CD8-positive, alpha-beta T cell (primary cell): ENCODE measurements at regions of chr13 and their contacts with region 1.

Region 1: DNA sequence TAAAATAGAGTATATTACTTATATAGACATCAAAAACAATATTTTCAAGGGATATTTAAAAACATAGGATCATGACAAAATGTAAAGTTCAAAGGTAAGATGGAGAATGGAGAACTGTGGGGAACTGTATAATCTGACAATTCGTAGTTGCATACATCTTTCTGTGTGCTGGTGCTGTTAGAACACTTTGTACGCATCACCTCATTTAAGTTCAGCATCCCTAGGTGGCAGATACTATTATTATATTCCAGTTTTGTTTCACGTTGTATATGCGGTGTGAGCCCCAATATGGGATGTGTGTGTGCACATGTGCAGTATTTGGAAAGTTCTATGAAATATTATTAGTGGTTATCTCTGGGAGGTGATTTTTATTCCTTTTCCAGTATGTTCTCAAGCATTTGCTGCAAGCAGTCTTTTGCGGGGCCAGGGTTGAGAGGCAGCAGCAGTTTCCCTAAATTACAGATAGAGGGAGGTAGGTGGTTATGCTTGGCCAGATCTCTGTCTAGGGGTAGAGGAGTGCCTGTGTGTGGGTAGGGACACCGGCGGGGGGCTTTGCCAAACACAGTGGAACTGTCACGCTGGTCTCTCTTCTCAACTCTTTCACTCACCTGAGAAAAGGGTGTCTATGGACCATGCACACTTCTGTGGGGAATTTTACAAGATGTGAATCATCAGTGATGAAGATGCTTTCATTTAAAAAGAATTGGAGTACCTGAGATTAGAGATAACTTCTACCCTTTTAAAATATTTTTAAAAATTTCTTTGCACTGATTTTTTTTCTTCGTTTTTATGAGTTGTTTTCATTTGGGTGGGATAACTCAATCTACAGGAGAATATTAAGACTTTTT is 55.6 kb upstream of the ALOX5AP start:
- DNase-seq: peak in 8 of 9 experiments; percentile 20 to 69 (median 34)
- ATAC-seq: peak; percentile 93
- H3K4me3 ChIP-seq: no peak overlapping the region
- H3K4me3 Mint-ChIP-seq: no peak overlapping the region
- H3K27ac ChIP-seq: no peak overlapping the region
- H3K27ac Mint-ChIP-seq: no peak overlapping the region
- H3K4me1 ChIP-seq: no peaks in the 10 kb centered on the region
- H3K4me1 Mint-ChIP-seq: peaks cover 8% of the 10 kb centered on the region
- H3K27me3 ChIP-seq: no peaks in the 10 kb centered on the region
- H3K27me3 Mint-ChIP-seq: no peaks in the 10 kb centered on the region
- CTCF ChIP-seq: peak; percentile 47

Region 2: GRCh38 chr13:30647824-30648521 is 31.7 kb before region 1 on chr13:
- CTCF ChIA-PET with region 1: no interaction called
- POLR2A ChIA-PET with region 1: no interaction called
- intact Hi-C with region 1: no loop called
- DNase-seq: no peak
- ATAC-seq: no peak
- H3K4me3 ChIP-seq: no peak overlapping the region
- H3K4me3 Mint-ChIP-seq: no peak overlapping the region
- H3K27ac ChIP-seq: no peak overlapping the region
- H3K27ac Mint-ChIP-seq: peak overlapping the region; percentile 19
- H3K4me1 ChIP-seq: no peaks in the 10 kb centered on the region
- H3K4me1 Mint-ChIP-seq: peaks cover 38% of the 10 kb centered on the region
- H3K27me3 ChIP-seq: no peaks in the 10 kb centered on the region
- H3K27me3 Mint-ChIP-seq: no peaks in the 10 kb centered on the region
- CTCF ChIP-seq: no peak

Region 3: GRCh38 chr13:30865123-30866049 is 185.7 kb after region 1 on chr13:
- CTCF ChIA-PET with region 1: interaction called, 3 read pairs
- POLR2A ChIA-PET with region 1: no interaction called
- intact Hi-C with region 1: loop called (anchors 1 to 5 kb)
- DNase-seq: peak in 8 of 9 experiments; percentile 24 to 68 (median 48)
- ATAC-seq: peak; percentile 93
- H3K4me3 ChIP-seq: no peak overlapping the region
- H3K4me3 Mint-ChIP-seq: no peak overlapping the region
- H3K27ac ChIP-seq: no peak overlapping the region
- H3K27ac Mint-ChIP-seq: no peak overlapping the region
- H3K4me1 ChIP-seq: no peaks in the 10 kb centered on the region
- H3K4me1 Mint-ChIP-seq: peaks cover 2% of the 10 kb centered on the region
- H3K27me3 ChIP-seq: no peaks in the 10 kb centered on the region
- H3K27me3 Mint-ChIP-seq: peaks cover 9% of the 10 kb centered on the region
- CTCF ChIP-seq: peak; percentile 97